HAP-1 (cell line): ENCODE measurements at regions of chr7 and their contacts with region 1.

Region 1: GRCh38 chr7:45111298-45112223 is at the start of gene TBRG4:
- DNase-seq: peak; percentile 91 to 95
- H3K4me3 ChIP-seq: peak within 1 kb of the TSS; percentile 98
- H3K4me1 ChIP-seq: peaks cover 5% of the 10 kb centered on the region
- H3K27me3 ChIP-seq: no peaks in the 10 kb centered on the region

Region 2: GRCh38 chr7:44581879-44582603 is 529.5 kb before region 1 on chr7 and contains the start of gene TMED4:
- in situ Hi-C with region 1: loop called (anchors 25 kb)
- DNase-seq: peak; percentile 99 to 100
- H3K4me3 ChIP-seq: peak within 1 kb of the TSS; percentile 80
- H3K4me1 ChIP-seq: peaks cover 12% of the 10 kb centered on the region
- H3K27me3 ChIP-seq: no peaks in the 10 kb centered on the region

Region 3: DNA sequence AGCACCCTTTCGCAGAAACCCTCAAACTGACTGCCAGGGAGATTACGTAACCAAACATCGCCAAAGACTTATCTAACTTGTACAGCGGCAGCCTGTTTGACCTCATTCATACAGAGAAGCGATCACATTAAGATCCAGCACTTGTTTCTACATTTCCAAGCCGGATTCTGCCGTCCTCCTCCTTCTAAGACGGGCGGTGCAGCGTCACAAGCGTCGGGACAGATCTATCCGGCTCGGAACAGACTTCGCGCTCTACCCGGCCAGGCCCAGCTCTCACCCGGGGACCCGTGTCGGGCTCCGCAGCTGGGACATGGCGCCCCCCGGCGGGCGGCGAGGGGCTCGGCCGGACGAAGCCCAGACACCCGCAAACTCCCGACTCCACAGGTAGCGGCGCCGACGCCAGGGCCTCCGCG is 264.0 kb before region 1 on chr7:
- in situ Hi-C with region 1: loop called (anchors 25 kb)
- DNase-seq: peak in 1 of 2 experiments; percentile 86
- H3K4me3 ChIP-seq: peak overlapping the region; percentile 67
- H3K4me1 ChIP-seq: peaks cover 21% of the 10 kb centered on the region
- H3K27me3 ChIP-seq: no peaks in the 10 kb centered on the region